Caco-2 (cell line): ENCODE measurements at regions of chr5 and their contacts with region 1.

Region 1: DNA sequence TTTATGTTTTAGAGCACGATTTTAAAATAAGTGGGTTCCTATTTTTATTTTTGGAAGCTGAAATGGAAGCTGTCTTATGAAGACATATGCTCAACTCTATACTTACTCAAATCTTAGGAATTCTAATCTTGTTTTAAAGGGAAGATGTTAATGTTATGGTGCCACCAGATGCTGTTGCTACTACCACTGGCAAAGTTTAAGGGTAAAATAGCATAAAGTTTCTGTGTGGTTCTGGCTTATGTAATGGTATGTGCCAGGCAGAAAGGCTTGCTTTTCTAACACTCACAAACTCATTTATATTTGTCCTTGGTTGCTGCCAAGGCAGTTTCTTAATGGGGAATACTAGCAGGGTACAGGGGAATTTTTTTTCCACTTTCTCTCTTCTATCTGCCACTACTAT is 204.9 kb downstream of the ZSWIM6 start:
- DNase-seq: no peak
- H3K4me3 ChIP-seq: no peak overlapping the region
- H3K4me3 Mint-ChIP-seq: no peak overlapping the region
- H3K27ac Mint-ChIP-seq: no peak overlapping the region
- H3K4me1 ChIP-seq: no peaks in the 10 kb centered on the region
- H3K4me1 Mint-ChIP-seq: no peaks in the 10 kb centered on the region
- H3K27me3 ChIP-seq: no peaks in the 10 kb centered on the region
- H3K27me3 Mint-ChIP-seq: no peaks in the 10 kb centered on the region
- CTCF ChIP-seq: no peak

Region 2: GRCh38 chr5:61586096-61587084 is 49.5 kb after region 1 on chr5:
- CTCF ChIA-PET with region 1: no interaction called
- POLR2A ChIA-PET with region 1: no interaction called
- intact Hi-C with region 1: loop called (anchors 1 kb)
- DNase-seq: no peak
- H3K4me3 ChIP-seq: no peak overlapping the region
- H3K4me3 Mint-ChIP-seq: no peak overlapping the region
- H3K27ac Mint-ChIP-seq: no peak overlapping the region
- H3K4me1 ChIP-seq: no peaks in the 10 kb centered on the region
- H3K4me1 Mint-ChIP-seq: no peaks in the 10 kb centered on the region
- H3K27me3 ChIP-seq: no peaks in the 10 kb centered on the region
- H3K27me3 Mint-ChIP-seq: peaks cover 6% of the 10 kb centered on the region
- CTCF ChIP-seq: no peak